Activated T-helper 2 cell treated with anti-CD3 and anti-CD28 coated beads, Interferon-gamma antibody, Interleukin-2, Interleukin-4, amounts not matched to agents 10 μg/mL and 5 μg/mL and 100 μg/mL, durations not matched to agents 14 hours and 24 hours and 36 hours (primary cell): ENCODE measurements at regions of chr7 and their contacts with region 1.

Region 1: DNA sequence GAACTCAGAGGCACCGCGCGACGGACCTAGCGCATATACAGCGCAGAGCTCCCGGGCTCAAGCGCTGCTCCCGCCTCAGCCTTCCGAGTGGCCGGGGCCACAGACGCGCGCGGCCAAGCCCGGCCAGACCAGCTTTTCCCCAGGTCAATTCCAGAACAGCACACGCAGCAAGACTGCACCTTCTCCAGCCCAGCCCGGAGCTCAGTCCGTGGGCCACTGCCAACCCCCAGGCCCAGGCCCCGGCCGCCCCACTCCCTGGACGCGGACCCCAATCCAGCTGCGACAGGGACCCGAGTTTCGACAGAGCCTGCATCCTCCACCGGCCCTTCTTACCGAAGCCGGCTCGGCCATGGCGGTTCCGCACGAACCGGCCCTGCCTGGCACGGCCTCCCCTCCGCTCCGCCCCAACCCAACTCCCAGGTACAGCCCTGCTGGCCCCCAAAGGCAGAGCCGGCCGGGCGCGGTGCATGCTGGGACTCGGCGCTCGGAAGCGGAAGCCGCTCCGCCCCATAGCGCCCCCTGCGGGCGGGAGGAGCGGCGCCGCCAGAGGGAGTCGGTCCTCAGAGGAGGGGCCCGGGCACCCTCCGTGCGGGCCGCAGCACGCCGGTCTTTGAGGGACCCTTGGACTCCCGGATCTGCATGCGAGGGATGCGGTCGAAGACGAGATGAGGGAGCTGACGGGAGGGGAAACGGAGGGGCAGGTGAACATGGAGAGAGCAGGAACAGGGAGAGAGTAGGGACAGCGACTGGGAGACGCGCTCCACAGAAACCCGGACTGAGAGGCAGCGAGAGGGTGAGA is at the start of gene ZNF425:
- DNase-seq: peak; percentile 91
- H3K4me3 Mint-ChIP-seq: peak within 1 kb of the TSS; percentile 100
- H3K27ac Mint-ChIP-seq: peak within 1 kb of the TSS; percentile 100
- H3K4me1 Mint-ChIP-seq: peaks cover 19% of the 10 kb centered on the region
- H3K27me3 Mint-ChIP-seq: no peaks in the 10 kb centered on the region
- total RNA-seq, gene ZNF425: 0.39 and 1.0 TPM in 2 replicates

Region 2: GRCh38 chr7:149067876-149068275 is 58.2 kb before region 1 on chr7:
- intact Hi-C with region 1: loop called (anchors 1 kb)
- DNase-seq: no peak
- H3K4me3 Mint-ChIP-seq: no peak overlapping the region
- H3K27ac Mint-ChIP-seq: no peak overlapping the region
- H3K4me1 Mint-ChIP-seq: peaks cover 5% of the 10 kb centered on the region
- H3K27me3 Mint-ChIP-seq: no peaks in the 10 kb centered on the region

Region 3: DNA sequence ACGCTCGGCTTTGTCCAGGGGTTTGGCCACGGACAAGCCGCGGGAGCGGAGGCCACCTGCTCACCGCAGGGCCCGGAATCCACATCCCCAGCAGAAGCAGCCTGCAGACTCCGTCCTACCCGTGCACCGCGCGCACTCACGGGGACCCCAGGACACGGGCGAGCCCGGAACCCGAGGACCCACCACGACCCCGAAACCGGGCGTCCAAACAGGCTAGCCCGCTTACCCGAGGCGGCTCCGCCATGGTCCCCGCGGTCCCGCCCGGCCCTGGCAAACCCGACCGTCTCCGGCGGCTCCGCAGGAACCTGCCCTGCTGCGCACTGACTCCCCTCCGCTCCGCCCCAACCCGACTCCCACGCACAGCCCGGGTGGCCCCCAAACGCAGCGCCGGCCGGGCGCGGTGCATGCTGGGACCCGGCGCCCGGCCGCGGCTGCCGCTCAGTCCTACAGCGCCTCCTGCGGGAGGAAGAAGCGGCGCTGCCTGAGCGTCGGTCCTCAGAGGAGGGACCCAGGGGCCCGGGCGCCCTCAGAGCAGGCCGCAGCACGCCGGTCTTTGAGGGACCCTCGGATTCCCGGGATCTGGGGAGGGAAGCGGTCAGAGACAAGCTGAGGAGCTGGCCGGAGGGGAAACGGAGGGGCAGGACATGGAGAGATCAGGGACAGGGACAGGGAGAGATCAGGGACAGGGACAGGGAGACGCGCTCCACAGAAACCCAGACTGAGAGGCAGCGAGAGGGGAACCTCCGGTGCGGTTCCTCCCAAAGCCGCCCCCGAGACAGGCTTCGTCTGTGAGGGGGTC is 35.5 kb before region 1 on chr7 and contains the start of gene ZNF786:
- intact Hi-C with region 1: loop called (anchors 1 kb)
- DNase-seq: peak; percentile 85
- H3K4me3 Mint-ChIP-seq: peak within 1 kb of the TSS; percentile 100
- H3K27ac Mint-ChIP-seq: peak within 1 kb of the TSS; percentile 100
- H3K4me1 Mint-ChIP-seq: peaks cover 12% of the 10 kb centered on the region
- H3K27me3 Mint-ChIP-seq: no peaks in the 10 kb centered on the region
- total RNA-seq, gene ZNF786: 10.0 and 10.3 TPM in 2 replicates

Region 4: DNA sequence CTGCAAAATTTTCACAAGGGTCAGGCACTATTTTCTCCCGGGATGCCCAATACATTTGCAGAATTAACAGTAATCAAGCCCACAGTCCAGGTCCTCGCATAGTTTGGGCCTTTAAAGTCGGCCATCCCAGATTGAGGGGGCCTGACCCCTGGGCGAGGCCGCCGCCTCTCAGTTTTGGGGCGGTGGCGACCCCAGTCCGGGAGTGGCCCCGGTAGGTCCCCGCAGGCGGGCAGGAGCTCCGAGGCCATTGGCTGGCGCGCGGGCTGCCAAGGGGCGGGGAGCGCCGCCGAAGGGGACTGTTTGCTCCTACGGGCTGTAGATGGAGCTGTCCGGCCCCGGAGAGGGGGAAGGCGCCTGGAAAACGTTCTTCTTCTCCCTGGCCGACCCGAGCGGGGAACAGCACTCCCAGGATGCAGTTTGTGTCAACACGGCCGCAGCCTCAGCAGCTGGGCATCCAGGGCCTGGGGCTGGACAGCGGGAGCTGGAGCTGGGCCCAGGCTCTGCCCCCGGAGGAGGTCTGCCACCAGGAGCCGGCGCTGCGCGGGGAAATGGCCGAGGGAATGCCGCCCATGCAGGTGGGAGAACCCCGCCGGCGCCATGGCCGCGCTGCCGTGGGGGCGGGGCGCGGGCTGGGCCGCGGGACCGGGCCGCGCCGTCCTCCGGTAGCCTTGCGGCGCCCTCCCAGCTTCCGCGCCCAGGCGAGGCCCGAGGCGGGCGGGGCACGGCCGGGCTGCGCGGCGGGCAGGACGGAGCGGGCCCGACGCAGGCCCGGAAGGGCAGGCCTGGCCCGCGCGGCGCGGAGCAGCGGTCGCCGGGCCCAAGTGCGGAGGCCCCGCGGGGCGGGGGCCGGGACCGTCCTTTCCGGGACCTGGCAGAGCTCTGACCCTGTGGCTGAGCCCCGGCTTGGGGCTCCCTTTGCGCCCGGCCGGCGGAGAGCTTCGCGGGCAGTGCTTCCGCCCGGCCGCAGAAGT is 69.4 kb after region 1 on chr7 and contains the start of gene ZNF282:
- intact Hi-C with region 1: loop called (anchors 5 kb)
- DNase-seq: peak; percentile 76
- H3K4me3 Mint-ChIP-seq: peak within 1 kb of the TSS; percentile 89
- H3K27ac Mint-ChIP-seq: peak within 1 kb of the TSS; percentile 88
- H3K4me1 Mint-ChIP-seq: peaks cover 41% of the 10 kb centered on the region
- H3K27me3 Mint-ChIP-seq: no peaks in the 10 kb centered on the region
- total RNA-seq, gene ZNF282: 116 and 118 TPM in 2 replicates

Region 5: DNA sequence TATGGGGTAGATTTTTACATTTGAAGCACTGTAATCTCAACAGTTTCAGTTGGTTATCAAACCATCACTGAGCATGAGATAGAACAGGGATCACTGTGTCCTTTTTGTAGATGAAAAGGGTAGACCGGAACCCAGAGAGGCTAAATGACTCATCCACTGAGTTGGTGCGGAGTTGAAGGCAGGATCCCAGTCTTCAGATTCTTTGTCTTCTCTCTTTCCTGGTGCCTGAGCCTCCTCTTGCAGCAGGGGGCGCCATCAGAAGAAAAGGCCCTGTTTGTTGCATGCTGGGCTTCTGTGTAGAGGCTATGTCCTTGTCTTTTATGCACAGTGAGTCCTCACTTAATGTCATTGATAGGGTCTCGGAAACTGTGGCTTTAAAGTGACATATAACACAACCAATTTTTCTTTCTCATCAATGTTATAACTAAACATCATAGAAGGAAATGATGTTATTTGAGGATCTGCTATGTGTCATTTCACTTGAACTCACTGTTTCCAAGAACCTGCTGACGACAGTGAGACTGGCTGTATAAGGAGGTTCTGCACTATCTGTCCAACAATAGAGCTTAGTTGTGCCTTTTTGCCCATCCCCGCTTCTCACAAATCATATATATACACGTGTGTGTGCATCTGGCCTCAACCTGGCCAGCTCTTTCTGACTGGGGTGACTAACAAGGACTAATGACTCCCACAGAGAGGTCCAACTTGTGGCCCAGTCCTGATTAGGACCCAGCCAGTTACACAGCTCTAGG is 83.6 kb after region 1 on chr7:
- intact Hi-C with region 1: loop called (anchors 1 kb)
- DNase-seq: peak; percentile 70
- H3K4me3 Mint-ChIP-seq: peak overlapping the region; percentile 32
- H3K27ac Mint-ChIP-seq: peak overlapping the region; percentile 94
- H3K4me1 Mint-ChIP-seq: peaks cover 31% of the 10 kb centered on the region
- H3K27me3 Mint-ChIP-seq: no peaks in the 10 kb centered on the region

Region 6: GRCh38 chr7:149261829-149262617 is 136.0 kb after region 1 on chr7 and contains the start of gene ZNF783:
- intact Hi-C with region 1: loop called (anchors 5 kb)
- DNase-seq: peak; percentile 84
- H3K4me3 Mint-ChIP-seq: peak within 1 kb of the TSS; percentile 82
- H3K27ac Mint-ChIP-seq: peak within 1 kb of the TSS; percentile 93
- H3K4me1 Mint-ChIP-seq: peaks cover 27% of the 10 kb centered on the region
- H3K27me3 Mint-ChIP-seq: no peaks in the 10 kb centered on the region
- total RNA-seq, gene ZNF783: 25.0 and 26.8 TPM in 2 replicates